SK-N-SH (cell line): ENCODE measurements at regions of chr1 and their contacts with region 1.

Region 1: DNA sequence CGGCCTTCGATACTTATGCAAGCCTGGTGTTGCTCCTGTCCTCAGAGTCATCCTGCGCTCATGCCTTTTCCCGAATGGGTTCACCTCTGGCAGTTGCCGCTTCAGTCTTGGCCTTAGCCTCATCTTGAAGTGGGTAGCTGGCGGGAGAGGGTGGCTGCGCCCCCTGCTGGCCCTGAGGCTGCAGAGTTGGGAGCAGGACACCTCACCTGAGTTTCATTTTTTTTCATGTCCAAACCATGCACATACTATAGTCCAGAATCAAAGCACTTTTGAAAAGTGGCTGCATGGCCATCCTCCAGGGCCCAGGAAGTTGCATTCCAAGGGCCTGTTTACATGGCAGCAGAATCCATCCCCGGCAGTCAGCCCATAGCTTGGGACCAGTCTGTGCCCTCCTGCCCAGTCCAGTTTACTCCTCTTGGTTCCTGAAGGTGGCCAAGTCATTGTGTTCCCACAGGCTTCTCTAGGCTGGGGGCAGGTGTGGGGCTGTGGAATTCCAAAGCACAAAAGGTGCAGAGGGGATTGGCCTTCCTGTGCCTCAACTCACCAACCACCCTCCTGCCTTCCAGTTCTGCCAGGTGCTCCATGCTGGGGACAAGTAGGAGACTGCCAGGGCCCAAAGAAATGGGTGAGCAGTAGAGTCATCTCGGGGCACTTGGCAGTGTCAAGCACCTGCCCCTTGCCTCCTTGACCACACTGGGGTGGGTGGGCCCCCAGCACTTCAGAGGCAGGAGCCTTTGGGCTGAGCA is 44.0 kb downstream of the YARS1 start:
- DNase-seq: peak; percentile 84
- H3K4me3 ChIP-seq: no peak overlapping the region; a peak in 1 of 4 replicates
- H3K27ac ChIP-seq: peak overlapping the region in 1 of 2 experiments; percentile 85; a peak in 2 of 4 replicates
- H3K4me1 ChIP-seq: peaks cover 16 to 26% of the 10 kb centered on the region in 2 experiments
- H3K27me3 ChIP-seq: no peaks in the 10 kb centered on the region
- CTCF ChIP-seq: peak; percentile 94
- EP300 ChIP-seq: no peak
- RAD21 ChIP-seq: peak; percentile 85

Region 2: GRCh38 chr1:32400876-32401631 is 372.1 kb before region 1 on chr1:
- CTCF ChIA-PET with region 1: interaction called, 26 read pairs
- POLR2A ChIA-PET with region 1: no interaction called
- DNase-seq: peak; percentile 87
- H3K4me3 ChIP-seq: peak overlapping the region in 1 of 2 experiments; percentile 7; a peak in 1 of 4 replicates
- H3K27ac ChIP-seq: no peak overlapping the region
- H3K4me1 ChIP-seq: no peaks in the 10 kb centered on the region; a peak in 1 of 4 replicates
- H3K27me3 ChIP-seq: no peaks in the 10 kb centered on the region
- CTCF ChIP-seq: peak; percentile 92
- EP300 ChIP-seq: no peak
- RAD21 ChIP-seq: peak; percentile 95

Region 3: GRCh38 chr1:32521165-32521564 is 252.0 kb before region 1 on chr1:
- CTCF ChIA-PET with region 1: interaction called, 11 read pairs
- POLR2A ChIA-PET with region 1: no interaction called
- DNase-seq: no peak
- H3K4me3 ChIP-seq: no peak overlapping the region
- H3K27ac ChIP-seq: no peak overlapping the region
- H3K4me1 ChIP-seq: no peaks in the 10 kb centered on the region
- H3K27me3 ChIP-seq: no peaks in the 10 kb centered on the region
- CTCF ChIP-seq: no peak
- EP300 ChIP-seq: no peak
- RAD21 ChIP-seq: no peak

Region 4: DNA sequence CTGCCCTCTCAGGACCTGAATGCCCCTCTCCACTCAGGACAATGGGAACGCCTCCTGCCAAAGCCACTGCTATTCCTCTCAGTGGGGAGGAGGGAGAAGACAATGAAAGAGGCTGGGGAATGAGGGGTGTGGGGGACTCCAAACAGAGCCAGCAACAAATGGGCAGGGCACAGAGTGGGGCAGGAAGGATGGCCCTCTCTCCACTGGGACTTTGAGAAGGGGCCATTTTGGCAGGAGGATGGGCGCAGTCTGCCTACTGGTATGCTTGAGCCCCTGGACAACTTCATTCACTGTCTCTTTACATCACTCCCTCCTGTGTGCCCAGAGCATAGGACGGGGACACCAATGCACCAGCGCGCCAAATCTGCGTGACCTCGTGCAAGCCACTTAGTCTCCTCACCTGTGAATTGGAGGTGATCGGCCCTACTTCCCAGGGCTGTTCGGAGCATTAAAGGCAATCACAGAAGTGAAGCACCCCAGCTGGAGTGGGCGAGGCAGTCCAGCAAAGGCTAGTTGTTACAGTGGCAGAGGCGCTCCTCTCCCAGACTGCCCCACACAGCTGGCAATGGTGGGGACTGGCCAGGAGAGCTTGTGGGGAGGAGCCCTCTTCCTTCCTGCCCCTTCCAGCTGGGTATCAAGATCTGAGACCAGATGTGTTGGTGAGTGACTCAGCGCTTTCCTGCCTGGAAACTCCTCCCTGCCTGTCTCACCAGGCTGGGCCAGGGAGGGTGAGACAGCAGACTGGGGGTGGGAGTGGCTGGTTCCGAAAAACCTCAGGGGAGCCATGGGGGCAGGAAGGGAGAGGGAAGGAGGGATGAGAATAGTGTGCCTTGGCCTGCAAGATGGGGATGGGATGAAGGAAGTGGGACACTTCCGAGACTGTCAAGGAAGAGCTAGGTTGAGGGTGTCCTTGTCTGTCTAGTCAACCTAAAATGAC is 48.2 kb before region 1 on chr1:
- CTCF ChIA-PET with region 1: interaction called, 392 read pairs
- POLR2A ChIA-PET with region 1: no interaction called
- DNase-seq: peak; percentile 51
- H3K4me3 ChIP-seq: no peak overlapping the region
- H3K27ac ChIP-seq: peak overlapping the region in 1 of 2 experiments; percentile 10; a peak in 2 of 4 replicates
- H3K4me1 ChIP-seq: peaks cover 10 to 13% of the 10 kb centered on the region in 2 experiments; a peak in 3 of 4 replicates
- H3K27me3 ChIP-seq: no peaks in the 10 kb centered on the region
- CTCF ChIP-seq: no peak
- EP300 ChIP-seq: no peak
- RAD21 ChIP-seq: no peak

Region 5: DNA sequence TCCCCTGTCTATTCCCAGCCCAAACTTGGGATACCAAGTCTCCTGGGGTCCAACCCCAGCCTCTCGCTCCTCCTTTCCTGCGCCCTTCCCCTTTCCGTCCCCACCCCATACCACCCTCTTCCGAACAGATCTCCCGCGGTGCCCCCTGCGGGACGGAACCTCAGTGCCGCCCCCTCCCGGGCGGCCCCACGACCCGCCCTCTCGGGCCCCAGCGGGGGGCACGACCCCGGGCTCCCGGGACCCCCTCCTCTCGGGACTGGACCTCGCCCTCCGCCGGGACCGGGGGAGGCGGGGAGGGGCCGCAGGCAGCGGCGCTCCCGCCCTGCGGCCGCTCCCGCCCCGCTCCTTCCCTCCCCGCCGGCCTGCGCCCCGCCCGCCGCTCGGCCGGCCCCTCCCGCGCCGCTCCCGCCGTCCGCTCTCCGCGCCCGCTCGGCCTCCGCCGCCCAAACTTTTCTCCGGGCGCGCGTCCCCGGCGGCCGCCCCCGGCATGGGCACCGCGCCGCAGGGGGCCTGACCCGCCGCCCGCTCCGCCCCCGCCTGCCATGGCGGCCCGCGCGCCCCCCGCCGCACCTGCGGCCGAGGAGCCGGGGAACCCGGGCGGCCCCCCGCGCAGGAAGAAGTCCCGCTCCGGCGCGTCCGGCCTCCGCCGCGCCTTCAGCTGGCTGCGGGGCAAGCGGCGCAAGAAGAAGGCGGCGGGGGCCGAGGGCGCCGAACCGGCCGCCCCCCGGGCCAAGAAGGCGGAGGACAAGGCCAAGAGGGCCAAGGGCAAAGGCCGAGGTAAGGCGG is 31.6 kb before region 1 on chr1:
- CTCF ChIA-PET with region 1: interaction called, 11 read pairs
- POLR2A ChIA-PET with region 1: no interaction called
- DNase-seq: peak; percentile 88
- H3K4me3 ChIP-seq: peak overlapping the region; percentile 66 to 72
- H3K27ac ChIP-seq: no peak overlapping the region
- H3K4me1 ChIP-seq: peaks cover 0 to 23% of the 10 kb centered on the region in 2 experiments; a peak in 1 of 4 replicates
- H3K27me3 ChIP-seq: no peaks in the 10 kb centered on the region
- CTCF ChIP-seq: peak; percentile 61
- EP300 ChIP-seq: no peak
- RAD21 ChIP-seq: no peak

Region 6: GRCh38 chr1:32753532-32754312 is 19.5 kb before region 1 on chr1:
- CTCF ChIA-PET with region 1: interaction called, 56 read pairs
- POLR2A ChIA-PET with region 1: interaction called, 3 read pairs
- DNase-seq: peak; percentile 100
- H3K4me3 ChIP-seq: peak overlapping the region; percentile 65 to 71
- H3K27ac ChIP-seq: no peak overlapping the region; a peak in 1 of 4 replicates
- H3K4me1 ChIP-seq: peaks cover 0 to 17% of the 10 kb centered on the region in 2 experiments; a peak in 1 of 4 replicates
- H3K27me3 ChIP-seq: no peaks in the 10 kb centered on the region
- CTCF ChIP-seq: no peak
- EP300 ChIP-seq: no peak
- RAD21 ChIP-seq: no peak

Region 7: GRCh38 chr1:32761253-32761880 is 11.8 kb before region 1 on chr1:
- CTCF ChIA-PET with region 1: interaction called, 56 read pairs
- POLR2A ChIA-PET with region 1: interaction called, 7 read pairs
- DNase-seq: peak; percentile 67
- H3K4me3 ChIP-seq: no peak overlapping the region
- H3K27ac ChIP-seq: peak overlapping the region; percentile 6 to 44; a peak in 2 of 4 replicates
- H3K4me1 ChIP-seq: peaks cover 20 to 42% of the 10 kb centered on the region in 2 experiments; a peak in 3 of 4 replicates
- H3K27me3 ChIP-seq: no peaks in the 10 kb centered on the region
- CTCF ChIP-seq: no peak
- EP300 ChIP-seq: no peak
- RAD21 ChIP-seq: no peak